Calu3 (cell line): ENCODE measurements at regions of chr10 and their contacts with region 1.

Region 1: DNA sequence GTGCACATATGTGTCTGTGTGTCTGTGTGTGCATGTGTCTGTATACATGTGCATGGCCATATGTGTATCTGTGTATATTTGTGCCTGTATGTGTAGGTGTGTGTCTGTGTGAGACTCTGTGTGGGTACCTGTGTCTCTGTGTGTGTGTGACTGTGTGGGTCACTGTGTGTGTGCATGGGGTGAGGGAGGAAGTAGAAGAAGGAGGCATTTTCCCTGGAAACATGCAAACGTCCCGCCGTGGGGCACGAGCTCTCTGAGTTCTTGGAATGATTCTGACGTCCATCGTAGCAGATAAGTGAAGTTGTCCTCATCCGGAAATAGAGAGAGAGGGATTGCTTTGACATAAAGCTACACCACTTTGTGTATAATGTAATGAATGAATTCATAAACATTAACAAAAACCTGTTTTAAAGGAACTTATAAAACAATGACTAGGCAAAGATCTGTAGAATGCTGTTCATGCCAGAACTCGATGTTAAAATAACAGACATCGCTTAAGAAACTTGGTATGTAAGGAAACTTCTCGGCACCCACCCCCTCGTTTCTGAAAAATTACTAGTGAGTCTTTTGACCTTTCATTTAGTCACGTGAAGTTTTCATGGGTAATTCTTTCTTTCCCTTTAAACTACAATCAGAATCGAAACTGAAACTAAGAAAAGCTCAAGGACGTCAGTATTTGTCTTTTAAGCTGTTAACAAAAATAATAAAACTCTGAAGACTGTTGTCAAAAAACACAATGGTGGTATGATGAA is 43.6 kb upstream of the KLF6 start:
- DNase-seq: no peak
- H3K4me3 Mint-ChIP-seq: peak overlapping the region; percentile 74
- H3K27ac Mint-ChIP-seq: peak overlapping the region; percentile 92
- H3K4me1 Mint-ChIP-seq: peaks cover 41% of the 10 kb centered on the region
- H3K27me3 Mint-ChIP-seq: no peaks in the 10 kb centered on the region
- CTCF ChIP-seq: no peak

Region 2: DNA sequence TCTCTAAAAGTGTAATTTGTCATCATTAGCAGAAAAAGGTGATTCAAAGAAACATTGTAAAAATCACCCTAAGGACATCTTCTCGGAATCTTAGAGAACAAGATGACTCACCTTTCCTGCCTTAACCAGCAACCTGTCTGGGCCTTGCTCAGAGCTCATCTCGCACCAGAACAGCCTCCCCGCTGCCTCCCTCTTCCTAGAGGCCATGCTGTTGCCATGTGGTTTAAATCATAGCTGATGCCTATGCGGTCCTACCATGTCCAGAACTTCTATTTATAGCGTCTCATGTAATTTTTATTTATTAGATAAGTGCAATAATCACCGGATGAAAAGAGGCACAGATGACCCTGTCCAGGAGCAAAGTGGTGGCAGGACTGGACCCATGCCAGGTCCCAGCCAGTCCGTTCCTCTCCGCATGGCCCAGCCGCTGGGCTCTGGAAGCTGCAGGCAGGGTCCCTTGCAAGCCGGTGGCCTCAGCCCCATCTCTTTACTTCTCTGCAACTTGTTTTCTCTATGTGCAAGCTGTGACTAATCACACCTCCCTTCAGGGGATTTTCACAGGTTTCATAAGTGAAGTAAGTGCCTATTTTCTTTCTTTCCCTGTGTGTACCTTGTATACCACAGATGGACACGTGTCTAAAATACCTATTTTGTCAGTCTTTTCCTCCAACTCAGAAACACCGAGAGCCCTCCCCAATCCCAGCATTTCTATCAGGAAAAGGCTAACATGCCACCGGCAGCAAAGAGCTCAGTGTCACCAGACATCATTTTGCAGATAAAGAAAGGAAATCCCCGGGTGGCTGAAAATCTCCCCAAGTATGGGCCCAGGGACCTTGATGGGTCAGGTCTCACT is 70.7 kb before region 1 on chr10:
- CTCF ChIA-PET with region 1: no interaction called
- intact Hi-C with region 1: no loop called
- DNase-seq: no peak
- H3K4me3 Mint-ChIP-seq: no peak overlapping the region
- H3K27ac Mint-ChIP-seq: peak overlapping the region; percentile 83
- H3K4me1 Mint-ChIP-seq: peaks cover 64% of the 10 kb centered on the region
- H3K27me3 Mint-ChIP-seq: no peaks in the 10 kb centered on the region
- CTCF ChIP-seq: no peak

Region 3: GRCh38 chr10:3852147-3852904 is 23.7 kb after region 1 on chr10:
- CTCF ChIA-PET with region 1: interaction called, 13 read pairs
- intact Hi-C with region 1: no loop called
- DNase-seq: peak; percentile 80
- H3K4me3 Mint-ChIP-seq: peak overlapping the region; percentile 55
- H3K27ac Mint-ChIP-seq: peak overlapping the region; percentile 97
- H3K4me1 Mint-ChIP-seq: peaks cover 46% of the 10 kb centered on the region
- H3K27me3 Mint-ChIP-seq: no peaks in the 10 kb centered on the region
- CTCF ChIP-seq: no peak

Region 4: GRCh38 chr10:3876481-3876921 is 47.9 kb after region 1 on chr10:
- CTCF ChIA-PET with region 1: no interaction called
- intact Hi-C with region 1: loop called (anchors 1 kb)
- DNase-seq: no peak
- H3K4me3 Mint-ChIP-seq: no peak overlapping the region
- H3K27ac Mint-ChIP-seq: no peak overlapping the region
- H3K4me1 Mint-ChIP-seq: peaks cover 56% of the 10 kb centered on the region
- H3K27me3 Mint-ChIP-seq: no peaks in the 10 kb centered on the region
- CTCF ChIP-seq: no peak

Region 5: GRCh38 chr10:3902054-3902808 is 73.7 kb after region 1 on chr10:
- CTCF ChIA-PET with region 1: no interaction called
- intact Hi-C with region 1: loop called (anchors 1 kb)
- DNase-seq: peak; percentile 23
- H3K4me3 Mint-ChIP-seq: no peak overlapping the region
- H3K27ac Mint-ChIP-seq: peak overlapping the region; percentile 43
- H3K4me1 Mint-ChIP-seq: peaks cover 48% of the 10 kb centered on the region
- H3K27me3 Mint-ChIP-seq: no peaks in the 10 kb centered on the region
- CTCF ChIP-seq: no peak